Activated CD4-positive, alpha-beta memory T cell treated with anti-CD3 and anti-CD28 coated beads, Interleukin-2, amount 10 ng/mL, durations not matched to agents 7 days and 5 days (primary cell): ENCODE measurements at regions of chr17 and their contacts with region 1.

Region 1: GRCh38 chr17:50865984-50866774 is at the start of gene TOB1:
- DNase-seq: peak; percentile 97
- H3K4me3 Mint-ChIP-seq: peak within 1 kb of the TSS; percentile 97
- H3K27ac Mint-ChIP-seq: peak within 1 kb of the TSS; percentile 95
- H3K4me1 Mint-ChIP-seq: peaks cover 49% of the 10 kb centered on the region
- H3K27me3 Mint-ChIP-seq: no peaks in the 10 kb centered on the region
- total RNA-seq, gene TOB1: 121 to 124 TPM

Region 2: DNA sequence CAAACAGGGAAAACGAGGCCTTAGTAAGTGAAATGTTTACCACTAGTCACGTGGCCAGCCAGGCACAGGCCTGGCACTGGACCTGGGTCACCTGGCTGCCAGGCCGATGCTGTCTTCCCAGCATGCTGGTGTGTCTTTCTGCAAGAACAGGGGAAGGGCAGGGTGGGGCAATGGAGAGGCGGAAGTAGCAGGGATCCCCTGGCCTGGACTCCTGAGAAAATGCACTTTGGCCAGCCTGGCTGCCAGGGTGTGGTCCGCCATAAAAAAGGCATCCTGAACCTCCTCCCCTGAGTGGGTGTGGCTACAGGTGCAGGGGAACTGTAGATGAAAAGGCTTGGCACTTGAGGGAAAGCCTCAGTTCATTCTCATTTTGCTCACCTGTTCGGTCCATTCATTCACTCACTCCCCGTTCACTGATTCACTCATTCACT is 97.8 kb before region 1 on chr17:
- CTCF ChIA-PET with region 1: no interaction called
- POLR2A ChIA-PET with region 1: no interaction called
- DNase-seq: peak; percentile 14
- H3K4me3 Mint-ChIP-seq: no peak overlapping the region
- H3K27ac Mint-ChIP-seq: no peak overlapping the region
- H3K4me1 Mint-ChIP-seq: peaks cover 20% of the 10 kb centered on the region
- H3K27me3 Mint-ChIP-seq: peaks cover 38% of the 10 kb centered on the region

Region 3: DNA sequence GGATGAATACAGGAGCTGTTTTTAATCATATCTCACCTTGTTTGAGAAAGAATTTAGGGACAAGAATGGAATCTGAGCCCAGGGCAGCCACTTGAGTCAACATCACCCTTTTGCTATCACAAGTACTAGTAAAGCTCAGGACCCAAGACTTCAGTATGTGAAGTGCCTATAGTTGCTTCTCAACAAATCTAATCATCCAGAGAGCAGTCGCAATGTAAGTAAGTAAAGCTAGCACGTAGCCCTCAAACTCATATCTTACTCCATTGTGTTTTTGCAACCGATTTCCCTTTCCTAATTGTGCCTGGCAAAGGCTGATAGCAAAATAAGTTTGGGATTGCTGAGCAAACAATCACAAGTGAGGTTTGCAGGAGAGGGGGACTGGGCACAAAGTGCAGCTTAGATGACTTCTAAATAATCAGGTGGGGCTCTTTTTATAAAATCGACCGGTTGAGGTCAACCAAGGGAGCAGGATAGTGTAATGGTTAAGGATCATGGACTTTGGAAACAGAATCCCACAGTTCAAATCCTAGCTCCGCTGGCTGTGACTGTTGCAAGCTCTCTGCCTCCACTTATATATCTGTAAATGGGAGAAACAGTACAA is 13.1 kb before region 1 on chr17:
- CTCF ChIA-PET with region 1: interaction called, 47 read pairs
- POLR2A ChIA-PET with region 1: interaction called, 129 read pairs
- DNase-seq: peak; percentile 12
- H3K4me3 Mint-ChIP-seq: no peak overlapping the region
- H3K27ac Mint-ChIP-seq: no peak overlapping the region
- H3K4me1 Mint-ChIP-seq: peaks cover 25% of the 10 kb centered on the region
- H3K27me3 Mint-ChIP-seq: peaks cover 14% of the 10 kb centered on the region

Region 4: DNA sequence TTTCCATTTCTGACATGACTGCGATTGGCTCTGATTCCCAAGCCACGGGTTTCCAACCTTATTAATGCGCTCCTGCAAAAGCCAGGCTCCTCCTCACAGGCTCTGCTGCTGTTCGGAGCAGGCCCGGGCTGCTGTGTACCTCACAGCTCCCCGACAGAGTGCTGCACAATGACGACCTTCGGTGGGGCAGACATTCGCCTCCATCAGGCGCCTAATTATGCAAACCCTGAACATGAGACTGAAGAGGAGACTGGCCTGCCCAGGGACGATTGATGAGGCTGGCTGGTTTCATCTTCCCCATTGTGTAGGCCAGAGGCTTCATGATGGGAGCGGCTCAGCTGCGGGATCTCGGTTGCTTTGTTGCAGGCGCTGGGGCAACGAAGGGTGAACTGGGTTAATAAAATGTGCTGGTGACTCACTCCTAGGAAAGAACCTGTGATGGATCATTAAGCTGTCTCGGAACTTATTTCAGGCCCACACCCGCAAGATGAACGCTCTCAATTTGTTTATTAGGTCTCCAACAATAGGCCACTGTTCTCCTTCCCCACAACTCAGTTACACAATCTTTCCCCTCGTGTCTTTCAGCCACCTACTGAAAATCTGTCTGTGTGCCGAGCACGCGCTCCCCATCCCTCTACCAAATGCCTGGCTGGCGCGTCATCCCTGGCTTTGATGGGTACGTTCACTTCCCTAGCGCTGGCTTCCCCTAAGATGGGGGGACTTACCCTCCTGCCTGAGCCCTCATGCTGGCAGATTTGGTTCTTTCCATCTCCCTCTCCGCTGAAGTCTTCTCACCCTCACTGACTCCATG is 27.2 kb after region 1 on chr17:
- CTCF ChIA-PET with region 1: no interaction called
- POLR2A ChIA-PET with region 1: interaction called, 298 read pairs
- DNase-seq: no peak
- H3K4me3 Mint-ChIP-seq: no peak overlapping the region
- H3K27ac Mint-ChIP-seq: no peak overlapping the region
- H3K4me1 Mint-ChIP-seq: peaks cover 8% of the 10 kb centered on the region
- H3K27me3 Mint-ChIP-seq: peaks cover 9% of the 10 kb centered on the region

Region 5: DNA sequence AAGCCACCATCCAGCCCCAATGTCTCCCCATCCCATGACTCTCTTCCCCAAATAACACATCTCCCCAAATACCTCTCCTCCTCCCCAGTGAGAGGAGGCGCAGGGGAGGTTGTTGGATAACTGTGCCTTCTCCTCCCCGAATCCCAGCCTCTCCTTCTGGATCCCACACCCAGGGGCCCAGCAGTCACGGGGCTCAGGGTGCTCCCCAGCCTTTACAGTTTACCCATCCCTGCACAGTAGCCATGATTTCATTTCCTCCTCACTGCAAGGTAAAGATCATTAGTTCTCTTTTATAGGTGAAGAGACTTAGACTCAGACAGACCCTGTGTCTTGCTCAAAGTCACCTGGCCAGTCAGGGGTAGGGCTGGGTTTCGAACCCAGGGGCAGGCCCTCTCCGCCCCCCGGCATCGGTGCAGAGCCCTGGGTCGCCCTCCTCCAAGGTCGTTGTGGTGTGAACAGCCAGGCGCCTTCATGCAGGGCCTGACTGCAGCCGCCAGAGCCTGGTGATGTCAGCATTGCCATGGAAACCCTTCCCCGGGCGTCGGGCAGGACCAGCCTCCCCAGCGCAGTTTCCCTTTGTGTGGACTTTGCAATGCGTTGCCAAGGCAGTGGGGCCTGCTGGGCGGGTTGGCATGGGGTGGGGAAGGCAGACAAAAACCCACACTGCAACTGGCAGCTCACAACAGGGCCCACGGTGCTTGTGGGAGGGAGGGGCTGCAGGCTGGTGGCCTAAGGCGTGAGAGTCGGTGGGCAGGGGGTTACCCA is 53.3 kb after region 1 on chr17:
- CTCF ChIA-PET with region 1: interaction called, 3 read pairs
- POLR2A ChIA-PET with region 1: interaction called, 144 read pairs
- DNase-seq: peak; percentile 91
- H3K4me3 Mint-ChIP-seq: peak overlapping the region; percentile 58
- H3K27ac Mint-ChIP-seq: peak overlapping the region; percentile 91
- H3K4me1 Mint-ChIP-seq: peaks cover 57% of the 10 kb centered on the region
- H3K27me3 Mint-ChIP-seq: peaks cover 3% of the 10 kb centered on the region

Region 6: DNA sequence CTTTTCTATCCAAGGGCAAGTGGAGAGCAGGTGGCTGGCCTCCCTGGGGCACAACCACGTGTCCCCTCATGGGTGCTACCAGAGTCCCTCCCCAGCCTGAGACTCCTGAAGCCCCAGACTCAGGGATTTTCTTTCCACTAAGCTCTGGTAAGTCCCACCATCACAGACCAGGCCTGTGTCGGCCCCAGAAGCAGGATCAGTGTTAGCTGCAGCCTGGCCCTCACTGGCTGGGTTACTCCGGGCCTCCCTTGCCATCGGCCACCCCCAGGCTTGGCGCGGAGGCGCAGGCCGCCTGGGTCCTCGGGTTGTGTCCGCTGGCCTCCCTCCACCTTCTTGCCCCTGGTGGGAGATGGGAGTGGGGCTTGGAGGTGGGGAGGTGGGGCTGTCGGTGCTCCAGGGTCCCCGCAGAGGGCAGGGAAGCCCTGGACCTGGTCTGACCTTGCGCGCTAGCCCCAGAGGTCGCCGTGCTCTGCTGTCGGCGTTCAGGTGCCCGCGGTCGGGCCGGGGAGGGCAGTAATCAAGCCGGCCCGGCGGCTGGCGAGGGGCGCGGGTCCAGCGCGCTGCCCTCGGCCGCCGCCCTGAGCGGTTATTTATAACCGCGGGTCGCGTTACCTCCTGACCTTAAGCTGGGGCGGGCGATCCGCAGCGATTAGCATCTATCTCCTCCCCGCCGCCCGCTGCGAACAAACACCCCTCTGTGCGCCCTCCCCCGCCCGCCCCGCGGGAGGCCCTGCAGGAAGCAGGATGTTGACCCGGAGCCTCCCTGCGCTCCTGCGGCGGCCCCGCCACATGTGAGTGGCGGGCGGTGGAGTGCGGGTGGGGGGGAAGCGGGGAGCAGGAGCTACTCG is 78.1 kb after region 1 on chr17:
- CTCF ChIA-PET with region 1: interaction called, 25 read pairs
- POLR2A ChIA-PET with region 1: interaction called, 457 read pairs
- DNase-seq: peak; percentile 90
- H3K4me3 Mint-ChIP-seq: peak overlapping the region; percentile 74
- H3K27ac Mint-ChIP-seq: peak overlapping the region; percentile 75
- H3K4me1 Mint-ChIP-seq: peaks cover 42% of the 10 kb centered on the region
- H3K27me3 Mint-ChIP-seq: no peaks in the 10 kb centered on the region

Region 7: DNA sequence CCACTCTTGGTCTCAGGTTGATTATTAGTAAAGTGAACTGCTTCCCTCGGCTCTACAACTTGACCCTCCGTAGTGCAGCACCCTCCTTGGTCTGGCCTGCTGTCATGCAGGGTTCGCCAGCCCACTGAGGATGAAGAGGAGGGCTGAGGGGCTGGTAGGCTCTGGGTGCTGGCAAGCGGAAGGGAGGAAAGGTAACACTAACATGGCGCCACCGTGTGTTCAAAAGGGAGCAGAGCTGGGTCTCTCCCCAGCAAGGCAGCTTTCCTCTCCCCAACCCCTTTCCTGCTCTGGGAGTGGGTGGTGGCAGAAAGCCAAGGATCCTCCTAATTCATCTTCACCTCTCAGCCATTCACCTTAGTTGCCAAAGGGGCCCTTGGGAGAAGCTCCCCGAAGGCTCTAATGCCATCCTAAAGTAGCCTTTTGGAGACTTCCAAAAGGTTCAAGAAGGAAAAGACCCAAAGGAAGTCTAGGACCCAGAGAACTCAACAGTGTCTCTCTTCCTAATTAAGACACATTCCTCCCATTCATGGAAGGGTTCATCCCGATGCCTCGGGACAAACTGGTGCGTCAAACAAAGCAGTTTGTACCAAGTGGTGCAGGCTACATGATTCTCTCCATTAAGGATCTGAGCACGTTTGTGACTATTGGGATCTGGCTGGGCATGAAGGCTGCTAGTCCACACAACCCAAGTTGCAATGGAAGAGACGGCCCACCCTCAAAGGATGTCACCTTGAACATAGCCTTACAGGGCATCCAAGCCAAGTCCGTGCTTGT is 90.8 kb after region 1 on chr17:
- CTCF ChIA-PET with region 1: interaction called, 18 read pairs
- POLR2A ChIA-PET with region 1: interaction called, 457 read pairs
- DNase-seq: peak; percentile 73
- H3K4me3 Mint-ChIP-seq: no peak overlapping the region
- H3K27ac Mint-ChIP-seq: peak overlapping the region; percentile 59
- H3K4me1 Mint-ChIP-seq: peaks cover 15% of the 10 kb centered on the region
- H3K27me3 Mint-ChIP-seq: no peaks in the 10 kb centered on the region

Region 8: GRCh38 chr17:51153210-51154072 is 287.3 kb after region 1 on chr17 and contains the start of gene NME1:
- CTCF ChIA-PET with region 1: interaction called, 7 read pairs
- POLR2A ChIA-PET with region 1: interaction called, 19 read pairs
- DNase-seq: peak; percentile 98
- H3K4me3 Mint-ChIP-seq: no peak within 1 kb of the TSS
- H3K27ac Mint-ChIP-seq: no peak within 1 kb of the TSS
- H3K4me1 Mint-ChIP-seq: peaks cover 10% of the 10 kb centered on the region
- H3K27me3 Mint-ChIP-seq: no peaks in the 10 kb centered on the region
- total RNA-seq, gene NME1: 87.9 to 90.8 TPM